H1 (cell line): ENCODE measurements at regions of chr11 and their contacts with region 1.

Region 1: DNA sequence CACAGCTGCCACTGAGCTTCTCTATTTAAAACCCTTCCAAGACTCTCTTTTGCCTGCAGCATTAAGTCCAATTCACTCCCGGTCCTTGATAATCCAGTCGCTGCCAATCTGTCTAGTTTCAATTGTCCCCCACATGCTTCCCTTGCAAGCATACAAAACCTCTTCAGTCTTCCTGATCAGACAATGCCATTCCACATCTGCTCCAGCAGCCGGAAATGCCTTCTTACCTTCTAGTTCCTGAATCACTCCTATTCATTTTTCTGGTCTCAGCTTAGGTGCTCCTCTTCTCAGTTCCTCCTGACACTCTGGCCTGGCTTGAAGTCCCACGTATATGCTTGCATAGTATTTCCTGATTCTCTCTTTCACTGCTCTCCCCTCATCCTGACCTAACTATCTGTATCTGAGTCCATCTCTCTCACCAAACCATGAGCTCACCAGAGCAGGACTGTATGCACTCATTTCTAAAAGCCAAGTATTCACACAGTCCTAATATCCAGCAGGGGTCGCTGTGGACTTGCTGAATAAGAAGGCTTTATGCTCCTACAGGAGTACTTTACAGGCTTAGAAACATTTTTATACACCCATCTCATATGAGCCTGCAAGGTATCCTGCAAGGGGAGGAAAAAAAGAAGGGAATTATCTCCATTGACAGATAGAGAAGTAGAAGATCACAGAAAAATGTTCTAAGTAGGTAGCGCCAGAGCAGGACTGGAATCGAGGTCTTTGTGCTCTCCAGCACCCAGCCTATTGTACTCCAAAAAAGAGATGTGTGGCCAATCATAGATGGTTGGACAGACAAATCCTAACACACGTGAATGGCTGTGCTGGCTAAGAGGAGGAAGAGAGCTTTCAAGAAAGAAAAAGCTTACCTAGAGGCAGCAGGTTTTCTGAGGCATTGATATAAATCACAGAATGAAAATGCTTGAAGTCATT is 19.2 kb downstream of the XRRA1 start:
- DNase-seq: peak in 1 of 2 experiments; percentile 66
- H3K4me3 ChIP-seq: no peak overlapping the region
- H3K27ac ChIP-seq: no peak overlapping the region
- H3K4me1 ChIP-seq: no peaks in the 10 kb centered on the region
- H3K27me3 ChIP-seq: no peaks in the 10 kb centered on the region
- CTCF ChIP-seq: peak in 2 of 3 experiments; percentile 77 to 81; a peak in 3 of 4 replicates
- EP300 ChIP-seq: no peak
- POLR2A ChIP-seq: no peak
- RAD21 ChIP-seq: peak; percentile 82 to 90

Region 2: GRCh38 chr11:74909385-74909784 is 20.3 kb before region 1 on chr11:
- CTCF ChIA-PET with region 1: interaction called, 13 read pairs
- POLR2A ChIA-PET with region 1: no interaction called
- DNase-seq: no peak
- H3K4me3 ChIP-seq: no peak overlapping the region
- H3K27ac ChIP-seq: no peak overlapping the region
- H3K4me1 ChIP-seq: no peaks in the 10 kb centered on the region
- H3K27me3 ChIP-seq: no peaks in the 10 kb centered on the region
- CTCF ChIP-seq: no peak
- EP300 ChIP-seq: no peak
- POLR2A ChIP-seq: no peak
- RAD21 ChIP-seq: no peak

Region 3: DNA sequence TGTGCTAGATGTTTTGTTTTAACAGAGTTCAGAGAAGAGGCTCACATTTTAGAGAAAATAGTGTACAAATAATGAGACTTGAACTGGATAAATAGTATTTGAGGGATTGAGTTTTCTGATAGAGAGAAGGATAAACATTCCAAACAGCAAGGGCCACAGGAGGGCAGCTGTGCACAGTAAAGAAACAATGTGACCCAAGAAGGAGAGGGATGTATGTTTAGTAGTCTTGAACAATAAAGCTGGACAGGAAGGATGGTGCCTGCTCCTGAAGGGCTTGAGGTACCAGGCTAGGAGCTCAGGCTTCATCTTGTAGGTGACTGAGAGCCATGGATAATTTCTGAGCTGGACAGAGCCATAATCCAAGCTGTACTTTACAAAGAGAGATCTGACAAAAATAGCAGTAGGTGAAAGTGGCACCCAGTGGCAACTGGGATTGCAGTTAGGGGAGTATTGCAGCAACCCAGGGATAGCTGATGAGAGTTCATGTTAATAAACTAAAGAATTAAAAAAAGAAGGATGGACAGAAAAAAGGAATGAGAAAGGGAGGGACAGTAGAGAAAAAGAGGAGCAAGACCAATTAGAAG is 11.7 kb after region 1 on chr11:
- CTCF ChIA-PET with region 1: interaction called, 35 read pairs
- POLR2A ChIA-PET with region 1: interaction called, 6 read pairs
- DNase-seq: no peak
- H3K4me3 ChIP-seq: no peak overlapping the region
- H3K27ac ChIP-seq: no peak overlapping the region
- H3K4me1 ChIP-seq: no peaks in the 10 kb centered on the region
- H3K27me3 ChIP-seq: no peaks in the 10 kb centered on the region
- CTCF ChIP-seq: no peak
- EP300 ChIP-seq: no peak
- POLR2A ChIP-seq: no peak
- RAD21 ChIP-seq: no peak